MCF 10A (cell line): ENCODE measurements at regions of chr4 and their contacts with region 1.

Region 1: DNA sequence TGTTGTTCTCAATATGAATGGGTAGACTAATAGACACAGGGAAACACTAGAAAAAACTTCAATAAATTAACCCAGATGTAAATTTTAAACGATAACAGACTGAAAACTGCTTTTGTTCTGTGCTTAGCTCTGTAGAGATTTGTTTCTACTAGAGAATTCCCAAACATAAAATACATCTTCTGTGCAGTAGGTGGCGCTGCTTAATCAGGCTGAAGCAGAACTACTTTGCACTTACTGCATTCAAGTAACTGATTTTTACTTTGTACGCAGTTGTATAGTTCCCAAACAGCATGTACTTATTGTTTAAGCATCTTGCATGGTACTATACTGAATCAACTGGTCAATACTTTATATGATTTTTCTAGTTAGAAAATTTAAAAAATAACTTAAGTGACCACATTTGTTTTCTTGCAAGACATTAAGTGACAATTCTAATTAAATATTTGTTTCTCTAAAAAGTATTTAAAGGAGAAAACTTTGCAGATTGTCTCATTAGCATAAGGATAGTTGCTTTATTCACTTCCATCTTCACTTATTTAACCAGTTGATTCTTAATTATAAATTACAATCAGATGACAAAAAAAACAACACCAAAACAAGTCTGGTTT is 490.6 kb downstream of the IL15 start:
- DNase-seq: peak; percentile 66
- H3K4me3 Mint-ChIP-seq: no peak overlapping the region
- H3K27ac Mint-ChIP-seq: no peak overlapping the region
- H3K4me1 Mint-ChIP-seq: peaks cover 7% of the 10 kb centered on the region
- H3K27me3 Mint-ChIP-seq: no peaks in the 10 kb centered on the region
- CTCF ChIP-seq: peak; percentile 79

Region 2: DNA sequence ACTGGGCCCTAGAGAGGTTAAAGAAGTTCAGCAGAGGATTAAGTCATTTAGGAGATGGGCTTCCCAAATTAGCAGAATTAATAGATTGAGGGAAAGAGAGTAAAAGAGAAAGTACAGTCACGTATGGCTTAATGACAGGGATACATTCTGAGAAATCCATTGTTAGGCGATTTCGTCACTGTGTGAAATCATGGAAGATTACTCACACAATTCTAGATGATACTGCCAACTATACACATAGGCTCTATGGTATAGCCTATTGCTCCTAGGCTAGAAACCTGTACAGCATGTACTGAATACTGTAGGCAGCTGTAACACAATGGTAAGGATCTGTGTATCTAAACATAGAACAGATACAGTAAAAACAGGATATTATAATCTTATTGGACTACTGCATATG is 1174.3 kb before region 1 on chr4:
- CTCF ChIA-PET with region 1: no interaction called
- POLR2A ChIA-PET with region 1: no interaction called
- intact Hi-C with region 1: no loop called
- DNase-seq: peak; percentile 91
- H3K4me3 Mint-ChIP-seq: peak overlapping the region; percentile 52
- H3K27ac Mint-ChIP-seq: peak overlapping the region; percentile 80
- H3K4me1 Mint-ChIP-seq: peaks cover 8% of the 10 kb centered on the region
- H3K27me3 Mint-ChIP-seq: no peaks in the 10 kb centered on the region
- CTCF ChIP-seq: no peak

Region 3: GRCh38 chr4:142567199-142567598 is 440.2 kb after region 1 on chr4:
- CTCF ChIA-PET with region 1: no interaction called
- POLR2A ChIA-PET with region 1: no interaction called
- intact Hi-C with region 1: no loop called
- DNase-seq: no peak
- H3K4me3 Mint-ChIP-seq: no peak overlapping the region
- H3K27ac Mint-ChIP-seq: no peak overlapping the region
- H3K4me1 Mint-ChIP-seq: peaks cover 13% of the 10 kb centered on the region
- H3K27me3 Mint-ChIP-seq: no peaks in the 10 kb centered on the region
- CTCF ChIP-seq: no peak

Region 4: GRCh38 chr4:142840516-142841123 is 713.6 kb after region 1 on chr4:
- CTCF ChIA-PET with region 1: interaction called, 7 read pairs
- POLR2A ChIA-PET with region 1: no interaction called
- intact Hi-C with region 1: loop called (anchors 1 kb)
- DNase-seq: peak; percentile 51
- H3K4me3 Mint-ChIP-seq: no peak overlapping the region
- H3K27ac Mint-ChIP-seq: no peak overlapping the region
- H3K4me1 Mint-ChIP-seq: peaks cover 6% of the 10 kb centered on the region
- H3K27me3 Mint-ChIP-seq: no peaks in the 10 kb centered on the region
- CTCF ChIP-seq: peak; percentile 44

Region 5: DNA sequence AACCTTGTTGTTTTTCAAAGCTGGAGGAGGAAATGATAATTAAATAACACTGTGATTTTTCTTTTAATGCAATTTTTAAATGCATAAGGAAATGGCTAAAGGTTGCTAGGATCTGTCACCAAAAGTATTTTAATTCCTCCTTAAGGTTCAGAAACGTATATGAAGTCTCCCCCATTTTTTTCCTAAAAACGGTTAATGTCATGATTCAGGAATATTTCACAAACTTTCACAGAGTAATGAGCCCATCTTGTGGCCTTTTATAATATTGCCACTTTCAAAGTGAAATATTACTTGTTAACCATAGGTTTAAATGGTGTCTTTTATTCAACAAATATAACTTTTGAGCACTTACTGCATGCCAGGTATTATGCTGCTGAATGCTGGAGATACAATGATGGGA is 958.2 kb after region 1 on chr4:
- CTCF ChIA-PET with region 1: interaction called, 4 read pairs
- POLR2A ChIA-PET with region 1: no interaction called
- intact Hi-C with region 1: loop called (anchors 5 kb)
- DNase-seq: peak; percentile 17
- H3K4me3 Mint-ChIP-seq: no peak overlapping the region
- H3K27ac Mint-ChIP-seq: no peak overlapping the region
- H3K4me1 Mint-ChIP-seq: peaks cover 14% of the 10 kb centered on the region
- H3K27me3 Mint-ChIP-seq: no peaks in the 10 kb centered on the region
- CTCF ChIP-seq: peak; percentile 31